ENCODE measurements at regions of chr5 and their contacts with region 1.

Region 1: GRCh38 chr5:8695902-8696845 is 827.2 kb downstream of the MTRR start:
- DNase-seq: no peak
- ATAC-seq: no peak
- H3K4me3 ChIP-seq: no peak overlapping the region
- H3K27ac ChIP-seq: no peak overlapping the region
- H3K4me1 ChIP-seq: no peaks in the 10 kb centered on the region
- H3K27me3 ChIP-seq: no peaks in the 10 kb centered on the region
- CTCF ChIP-seq: no peak
- EP300 ChIP-seq: no peak
- POLR2A ChIP-seq: no peak
- RAD21 ChIP-seq: no peak

Region 2: GRCh38 chr5:8540317-8540716 is 155.9 kb before region 1 on chr5:
- CTCF ChIA-PET with region 1: no interaction called
- POLR2A ChIA-PET with region 1: no interaction called
- in situ Hi-C with region 1: loop called (anchors 10 kb)
- intact Hi-C with region 1: no loop called
- DNase-seq: no peak
- ATAC-seq: no peak
- H3K4me3 ChIP-seq: no peak overlapping the region
- H3K27ac ChIP-seq: no peak overlapping the region
- H3K4me1 ChIP-seq: no peaks in the 10 kb centered on the region
- H3K27me3 ChIP-seq: no peaks in the 10 kb centered on the region
- CTCF ChIP-seq: no peak
- EP300 ChIP-seq: no peak
- POLR2A ChIP-seq: no peak
- RAD21 ChIP-seq: no peak

Region 3: GRCh38 chr5:8784713-8785112 is 88.5 kb after region 1 on chr5:
- CTCF ChIA-PET with region 1: no interaction called
- POLR2A ChIA-PET with region 1: no interaction called
- in situ Hi-C with region 1: no loop called
- intact Hi-C with region 1: no loop called
- DNase-seq: no peak
- ATAC-seq: no peak
- H3K4me3 ChIP-seq: no peak overlapping the region
- H3K27ac ChIP-seq: no peak overlapping the region
- H3K4me1 ChIP-seq: no peaks in the 10 kb centered on the region
- H3K27me3 ChIP-seq: no peaks in the 10 kb centered on the region
- CTCF ChIP-seq: no peak
- EP300 ChIP-seq: no peak
- POLR2A ChIP-seq: no peak
- RAD21 ChIP-seq: no peak